ENCODE measurements at regions of chr11 and their contacts with region 1.

Region 1: DNA sequence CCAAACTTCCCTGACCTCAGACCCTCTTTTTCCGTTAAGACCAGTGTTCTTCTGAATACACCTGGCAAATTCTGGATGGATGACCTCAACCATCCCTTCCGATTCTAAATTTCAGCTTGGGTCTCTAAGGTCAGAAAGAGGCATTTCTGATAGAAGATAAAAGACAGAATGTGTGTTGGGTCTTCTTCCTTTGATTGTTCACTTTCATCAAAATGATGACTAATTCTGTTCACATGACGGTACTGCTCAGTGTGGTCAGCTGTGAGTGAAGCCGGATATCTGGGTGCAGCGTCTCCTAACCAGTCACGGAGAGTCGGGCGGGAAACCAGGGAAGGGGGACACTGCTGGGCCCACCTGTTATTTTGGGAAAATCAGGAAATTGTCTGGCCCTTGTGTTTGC is 151.6 kb upstream of the NAV2 start:
- DNase-seq: no peak
- H3K4me3 ChIP-seq: no peak overlapping the region
- CTCF ChIP-seq: no peak

Region 2: DNA sequence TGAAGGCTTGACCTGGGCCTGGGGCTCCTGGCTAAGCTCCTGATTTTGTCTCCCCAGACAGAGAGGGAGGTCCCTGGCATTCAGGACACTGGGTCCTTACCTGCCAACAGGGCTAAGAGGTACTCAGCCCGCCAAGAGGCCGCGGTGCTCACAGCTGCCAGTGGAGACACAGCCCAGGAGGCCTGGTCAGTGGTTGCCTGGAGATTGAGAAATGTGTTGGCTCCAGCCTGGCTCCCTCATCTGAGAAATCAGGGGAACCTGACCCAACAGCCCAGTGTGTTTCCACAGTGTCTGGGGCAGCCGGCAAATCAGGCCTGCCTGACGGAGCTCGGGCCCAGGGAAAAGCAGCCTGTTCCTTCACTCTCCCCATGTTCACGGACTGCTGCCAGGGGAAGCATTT is 72.3 kb after region 1 on chr11:
- CTCF ChIA-PET with region 1: interaction called, 14 read pairs
- POLR2A ChIA-PET with region 1: no interaction called
- DNase-seq: no peak
- H3K4me3 ChIP-seq: no peak overlapping the region
- CTCF ChIP-seq: no peak

Region 3: GRCh38 chr11:19712281-19713220 is 151.5 kb after region 1 on chr11 and contains the start of gene NAV2:
- CTCF ChIA-PET with region 1: interaction called, 56 read pairs
- POLR2A ChIA-PET with region 1: no interaction called
- DNase-seq: no peak
- H3K4me3 ChIP-seq: peak within 1 kb of the TSS; percentile 80
- CTCF ChIP-seq: no peak

Region 4: GRCh38 chr11:19756675-19757475 is 195.9 kb after region 1 on chr11:
- CTCF ChIA-PET with region 1: interaction called, 46 read pairs
- POLR2A ChIA-PET with region 1: no interaction called
- DNase-seq: no peak
- H3K4me3 ChIP-seq: no peak overlapping the region
- CTCF ChIP-seq: no peak

Region 5: GRCh38 chr11:19808076-19808911 is 247.3 kb after region 1 on chr11:
- CTCF ChIA-PET with region 1: interaction called, 10 read pairs
- POLR2A ChIA-PET with region 1: no interaction called
- DNase-seq: no peak
- H3K4me3 ChIP-seq: no peak overlapping the region
- CTCF ChIP-seq: peak; percentile 3

Measured in AG04449 (cell line).